ENCODE measurements at regions of chr1 and their contacts with region 1.

Region 1: DNA sequence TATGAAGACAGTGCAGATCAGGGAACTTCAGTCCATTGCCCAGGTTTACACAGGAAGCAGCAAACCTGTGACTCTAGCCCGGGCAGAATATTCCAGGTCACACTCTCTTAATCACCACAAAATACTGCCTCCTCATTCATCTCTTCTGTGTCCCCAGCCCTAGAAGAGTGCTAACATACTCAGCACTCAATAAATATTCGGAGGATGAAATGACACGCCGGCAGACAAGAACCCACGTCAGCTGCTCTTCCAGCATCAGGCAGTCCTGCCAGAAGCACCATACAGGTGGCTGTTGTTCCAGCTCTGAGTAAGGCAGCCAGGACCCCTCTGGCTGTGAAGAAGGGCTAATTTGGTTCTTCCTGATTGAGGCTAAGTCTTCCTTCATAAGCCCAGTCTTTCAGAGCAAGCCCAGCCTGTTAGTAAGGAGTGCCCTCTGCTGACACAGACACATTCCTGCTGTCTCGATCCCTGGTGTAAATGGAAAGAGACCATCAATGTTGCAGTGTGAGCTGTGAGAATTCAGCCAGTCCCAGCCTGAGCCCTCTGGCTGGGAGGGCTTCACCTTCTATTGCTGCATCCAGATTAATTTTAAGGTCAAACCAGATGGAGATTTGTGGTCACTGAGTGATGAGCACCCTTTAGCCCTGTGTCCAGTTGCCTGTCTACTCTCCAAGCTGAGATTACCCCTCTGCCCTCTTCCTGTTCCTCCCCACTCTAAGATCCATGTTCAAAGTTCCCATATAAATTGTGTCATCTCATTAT is 45.0 kb upstream of the KIRREL1 start:
- DNase-seq: peak; percentile 79
- H3K4me3 ChIP-seq: no peak overlapping the region
- H3K27ac ChIP-seq: no peak overlapping the region
- H3K4me1 ChIP-seq: no peaks in the 10 kb centered on the region
- H3K27me3 ChIP-seq: no peaks in the 10 kb centered on the region
- CTCF ChIP-seq: peak; percentile 73

Region 2: GRCh38 chr1:157380523-157380922 is 568.0 kb before region 1 on chr1:
- CTCF ChIA-PET with region 1: no interaction called
- POLR2A ChIA-PET with region 1: no interaction called
- intact Hi-C with region 1: loop called (anchors 5 kb)
- DNase-seq: no peak
- H3K4me3 ChIP-seq: no peak overlapping the region
- H3K27ac ChIP-seq: no peak overlapping the region
- H3K4me1 ChIP-seq: no peaks in the 10 kb centered on the region
- H3K27me3 ChIP-seq: peaks cover 66% of the 10 kb centered on the region
- CTCF ChIP-seq: no peak

Region 3: DNA sequence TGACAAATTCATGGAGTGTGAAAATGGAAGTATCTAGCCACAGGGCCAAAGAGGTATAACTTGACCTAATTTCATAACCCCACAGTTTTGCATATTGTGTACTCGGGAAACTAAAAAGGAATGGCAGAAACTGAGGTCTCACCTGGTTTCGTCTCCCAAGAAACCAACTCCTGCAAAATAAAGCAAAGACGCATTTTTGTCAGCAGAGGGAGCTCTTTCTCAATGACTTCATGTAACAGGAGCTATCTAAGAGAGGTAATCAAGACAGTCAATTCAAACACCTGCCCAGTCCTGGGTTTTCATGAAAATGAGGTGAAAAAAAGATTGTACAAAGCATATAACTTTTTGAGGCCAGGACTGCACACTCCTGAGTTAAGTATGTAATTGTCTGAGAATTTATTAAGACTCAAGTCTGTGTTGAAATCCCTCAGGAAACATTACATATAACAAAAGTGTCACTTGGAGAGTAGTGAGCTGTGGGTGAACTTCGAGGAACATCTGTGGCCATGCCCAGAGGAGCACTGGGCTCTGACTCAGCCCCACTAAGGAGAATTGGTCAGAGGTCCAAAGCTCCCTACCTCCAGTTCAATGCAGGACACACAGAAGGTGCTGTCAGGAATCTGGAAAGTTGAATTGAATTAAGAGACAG is 368.2 kb before region 1 on chr1:
- CTCF ChIA-PET with region 1: interaction called, 11 read pairs
- POLR2A ChIA-PET with region 1: no interaction called
- intact Hi-C with region 1: loop called (anchors 2 kb)
- DNase-seq: peak; percentile 68
- H3K4me3 ChIP-seq: no peak overlapping the region
- H3K27ac ChIP-seq: no peak overlapping the region
- H3K4me1 ChIP-seq: no peaks in the 10 kb centered on the region
- H3K27me3 ChIP-seq: peaks cover 21% of the 10 kb centered on the region
- CTCF ChIP-seq: peak; percentile 86

Region 4: GRCh38 chr1:157773493-157774350 is 174.8 kb before region 1 on chr1:
- CTCF ChIA-PET with region 1: no interaction called
- POLR2A ChIA-PET with region 1: no interaction called
- intact Hi-C with region 1: loop called (anchors 5 kb)
- DNase-seq: peak; percentile 35
- H3K4me3 ChIP-seq: no peak overlapping the region
- H3K27ac ChIP-seq: no peak overlapping the region
- H3K4me1 ChIP-seq: peaks cover 19% of the 10 kb centered on the region
- H3K27me3 ChIP-seq: no peaks in the 10 kb centered on the region
- CTCF ChIP-seq: peak; percentile 47

Region 5: DNA sequence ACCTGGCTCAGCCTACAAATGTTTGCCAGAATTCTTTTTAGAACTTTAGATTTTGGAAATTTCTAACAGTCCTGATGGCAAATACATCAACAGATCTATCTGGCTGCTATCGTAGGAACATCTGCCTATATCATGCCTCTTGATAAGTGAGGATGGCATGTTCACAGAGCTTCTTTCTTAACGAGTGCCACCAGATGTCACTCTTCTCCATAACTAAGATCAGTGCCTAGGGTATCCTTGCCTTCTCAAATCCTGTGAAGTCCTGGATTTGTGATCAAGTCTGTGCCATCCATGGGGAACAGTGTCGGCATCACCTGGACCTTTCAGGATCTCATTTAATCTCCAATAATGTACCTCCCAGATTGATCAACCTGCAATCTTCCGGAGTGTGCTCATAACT is 70.4 kb before region 1 on chr1:
- CTCF ChIA-PET with region 1: interaction called, 16 read pairs
- POLR2A ChIA-PET with region 1: no interaction called
- intact Hi-C with region 1: loop called (anchors 1 kb)
- DNase-seq: peak; percentile 83
- H3K4me3 ChIP-seq: no peak overlapping the region
- H3K27ac ChIP-seq: no peak overlapping the region
- H3K4me1 ChIP-seq: no peaks in the 10 kb centered on the region
- H3K27me3 ChIP-seq: peaks cover 9% of the 10 kb centered on the region
- CTCF ChIP-seq: peak; percentile 69

Region 6: DNA sequence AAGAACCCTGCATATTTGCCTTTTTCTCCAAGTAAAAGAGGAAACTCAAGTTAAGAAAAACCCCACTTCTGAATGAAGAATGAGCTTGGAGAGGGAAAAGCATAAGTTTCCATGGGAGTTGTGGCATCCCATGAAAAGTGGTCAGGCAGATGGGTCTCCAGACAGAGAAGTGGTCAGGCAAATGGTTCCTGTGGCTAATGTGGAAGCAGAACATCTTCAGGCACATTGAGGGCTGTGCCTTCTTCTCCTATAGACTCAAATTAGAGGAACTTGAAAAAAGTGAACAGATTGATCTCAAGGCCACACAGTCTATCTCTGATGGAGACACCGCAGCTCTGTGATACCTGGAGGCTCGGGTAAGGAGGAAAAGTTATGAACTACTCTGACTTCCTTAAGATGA is 10.7 kb before region 1 on chr1:
- CTCF ChIA-PET with region 1: interaction called, 10 read pairs
- POLR2A ChIA-PET with region 1: no interaction called
- intact Hi-C with region 1: no loop called
- DNase-seq: no peak
- H3K4me3 ChIP-seq: no peak overlapping the region
- H3K27ac ChIP-seq: no peak overlapping the region
- H3K4me1 ChIP-seq: no peaks in the 10 kb centered on the region
- H3K27me3 ChIP-seq: no peaks in the 10 kb centered on the region
- CTCF ChIP-seq: no peak

Region 7: DNA sequence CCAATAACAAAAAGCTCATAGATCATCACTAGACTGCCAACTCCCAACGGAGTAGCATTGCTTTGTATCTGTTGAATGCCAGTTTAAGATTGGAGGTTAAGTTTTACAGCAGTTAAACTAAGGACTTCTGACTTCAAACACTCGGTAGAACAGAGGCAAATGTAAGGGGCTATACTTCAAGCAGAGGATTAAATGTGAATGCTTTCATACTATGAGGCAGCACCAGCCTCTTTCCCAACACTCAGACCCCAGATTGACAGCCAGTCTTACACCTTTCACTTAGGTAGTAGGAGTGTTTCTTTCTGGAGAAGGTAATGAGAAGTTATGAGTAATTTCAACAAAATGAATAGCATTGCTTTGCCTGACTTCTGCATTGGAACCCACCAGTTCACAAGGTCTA is 546.3 kb after region 1 on chr1:
- CTCF ChIA-PET with region 1: no interaction called
- POLR2A ChIA-PET with region 1: no interaction called
- intact Hi-C with region 1: no loop called
- DNase-seq: no peak
- H3K4me3 ChIP-seq: no peak overlapping the region
- H3K27ac ChIP-seq: no peak overlapping the region
- H3K4me1 ChIP-seq: no peaks in the 10 kb centered on the region
- H3K27me3 ChIP-seq: peaks cover 52% of the 10 kb centered on the region
- CTCF ChIP-seq: no peak